Prostate gland (tissue), 2 donors: ENCODE measurements at regions of chr7 and their contacts with region 1.

Region 1: DNA sequence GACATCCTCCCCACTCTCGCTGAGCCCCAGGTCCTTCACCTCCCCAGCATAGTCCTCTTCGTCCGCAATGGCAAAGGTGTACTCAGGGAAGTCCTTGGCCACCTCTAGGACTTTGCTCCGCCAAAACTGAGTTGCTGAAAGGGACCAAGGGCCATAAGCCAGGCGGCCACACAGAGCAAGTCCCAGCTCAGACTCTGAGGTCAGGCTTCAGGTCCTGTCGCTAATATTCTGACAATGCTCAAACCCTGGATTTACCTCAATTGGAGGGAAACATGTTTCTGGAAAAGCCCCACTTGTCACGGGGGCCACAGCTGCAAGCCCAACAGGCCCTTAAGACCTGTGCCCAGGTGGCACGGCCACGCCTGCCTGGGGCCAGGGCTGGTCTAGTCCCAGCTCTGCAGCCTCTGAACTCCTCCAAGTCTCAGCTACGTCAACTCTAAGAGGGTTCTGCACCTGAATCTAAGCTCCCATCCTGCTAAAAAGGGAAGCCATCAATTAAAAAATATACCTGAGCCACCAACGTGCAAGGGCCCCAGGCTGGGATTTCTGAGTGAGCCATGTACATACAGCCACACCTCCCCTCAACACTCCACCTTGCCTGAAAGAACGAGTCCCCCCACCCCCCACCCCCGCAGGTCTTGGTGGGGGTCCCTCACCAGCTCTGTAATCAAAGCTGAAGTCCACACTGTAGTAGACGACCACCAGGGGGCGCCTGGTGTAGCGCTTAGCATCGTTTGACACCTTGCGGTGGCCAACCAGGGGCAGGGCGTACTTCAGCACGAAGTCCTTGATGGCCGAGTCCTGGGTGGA is 22.9 kb downstream of the PDIA4 start:
- DNase-seq: peak; percentile 75
- H3K4me3 ChIP-seq: no peak overlapping the region
- H3K27ac ChIP-seq: no peak overlapping the region
- H3K4me1 ChIP-seq: no peaks in the 10 kb centered on the region
- H3K27me3 ChIP-seq: no peaks in the 10 kb centered on the region
- CTCF ChIP-seq: peak; percentile 74 to 92 (median 80)
- POLR2A ChIP-seq: no peak

Region 2: GRCh38 chr7:148940702-148941597 is 64.5 kb before region 1 on chr7:
- intact Hi-C with region 1: no loop called
- DNase-seq: peak; percentile 69
- H3K4me3 ChIP-seq: peak overlapping the region; percentile 55 to 60
- H3K27ac ChIP-seq: peak overlapping the region; percentile 77 to 83
- H3K4me1 ChIP-seq: no peaks in the 10 kb centered on the region
- H3K27me3 ChIP-seq: no peaks in the 10 kb centered on the region
- CTCF ChIP-seq: no peak
- POLR2A ChIP-seq: peak; percentile 41

Region 3: GRCh38 chr7:149067876-149068275 is 62.4 kb after region 1 on chr7:
- intact Hi-C with region 1: loop called (anchors 5 kb)
- DNase-seq: no peak
- H3K4me3 ChIP-seq: no peak overlapping the region
- H3K27ac ChIP-seq: no peak overlapping the region
- H3K4me1 ChIP-seq: no peaks in the 10 kb centered on the region
- H3K27me3 ChIP-seq: no peaks in the 10 kb centered on the region
- CTCF ChIP-seq: no peak
- POLR2A ChIP-seq: no peak

Region 4: DNA sequence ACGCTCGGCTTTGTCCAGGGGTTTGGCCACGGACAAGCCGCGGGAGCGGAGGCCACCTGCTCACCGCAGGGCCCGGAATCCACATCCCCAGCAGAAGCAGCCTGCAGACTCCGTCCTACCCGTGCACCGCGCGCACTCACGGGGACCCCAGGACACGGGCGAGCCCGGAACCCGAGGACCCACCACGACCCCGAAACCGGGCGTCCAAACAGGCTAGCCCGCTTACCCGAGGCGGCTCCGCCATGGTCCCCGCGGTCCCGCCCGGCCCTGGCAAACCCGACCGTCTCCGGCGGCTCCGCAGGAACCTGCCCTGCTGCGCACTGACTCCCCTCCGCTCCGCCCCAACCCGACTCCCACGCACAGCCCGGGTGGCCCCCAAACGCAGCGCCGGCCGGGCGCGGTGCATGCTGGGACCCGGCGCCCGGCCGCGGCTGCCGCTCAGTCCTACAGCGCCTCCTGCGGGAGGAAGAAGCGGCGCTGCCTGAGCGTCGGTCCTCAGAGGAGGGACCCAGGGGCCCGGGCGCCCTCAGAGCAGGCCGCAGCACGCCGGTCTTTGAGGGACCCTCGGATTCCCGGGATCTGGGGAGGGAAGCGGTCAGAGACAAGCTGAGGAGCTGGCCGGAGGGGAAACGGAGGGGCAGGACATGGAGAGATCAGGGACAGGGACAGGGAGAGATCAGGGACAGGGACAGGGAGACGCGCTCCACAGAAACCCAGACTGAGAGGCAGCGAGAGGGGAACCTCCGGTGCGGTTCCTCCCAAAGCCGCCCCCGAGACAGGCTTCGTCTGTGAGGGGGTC is 85.2 kb after region 1 on chr7 and contains the start of gene ZNF786:
- intact Hi-C with region 1: loop called (anchors 2 kb)
- DNase-seq: peak; percentile 81
- H3K4me3 ChIP-seq: peak within 1 kb of the TSS; percentile 85 to 95
- H3K27ac ChIP-seq: peak within 1 kb of the TSS; percentile 98
- H3K4me1 ChIP-seq: no peaks in the 10 kb centered on the region
- H3K27me3 ChIP-seq: no peaks in the 10 kb centered on the region
- CTCF ChIP-seq: peak; percentile 79 to 97 (median 92)
- POLR2A ChIP-seq: peak; percentile 71
- total RNA-seq, gene ZNF786: 9.3 to 12.8 TPM